ENCODE measurements at regions of chr16 and their contacts with region 1.

Region 1: GRCh38 chr16:106623-107324 is 28.7 kb downstream of the MPG start:
- DNase-seq: no peak
- ATAC-seq: no peak

Region 2: DNA sequence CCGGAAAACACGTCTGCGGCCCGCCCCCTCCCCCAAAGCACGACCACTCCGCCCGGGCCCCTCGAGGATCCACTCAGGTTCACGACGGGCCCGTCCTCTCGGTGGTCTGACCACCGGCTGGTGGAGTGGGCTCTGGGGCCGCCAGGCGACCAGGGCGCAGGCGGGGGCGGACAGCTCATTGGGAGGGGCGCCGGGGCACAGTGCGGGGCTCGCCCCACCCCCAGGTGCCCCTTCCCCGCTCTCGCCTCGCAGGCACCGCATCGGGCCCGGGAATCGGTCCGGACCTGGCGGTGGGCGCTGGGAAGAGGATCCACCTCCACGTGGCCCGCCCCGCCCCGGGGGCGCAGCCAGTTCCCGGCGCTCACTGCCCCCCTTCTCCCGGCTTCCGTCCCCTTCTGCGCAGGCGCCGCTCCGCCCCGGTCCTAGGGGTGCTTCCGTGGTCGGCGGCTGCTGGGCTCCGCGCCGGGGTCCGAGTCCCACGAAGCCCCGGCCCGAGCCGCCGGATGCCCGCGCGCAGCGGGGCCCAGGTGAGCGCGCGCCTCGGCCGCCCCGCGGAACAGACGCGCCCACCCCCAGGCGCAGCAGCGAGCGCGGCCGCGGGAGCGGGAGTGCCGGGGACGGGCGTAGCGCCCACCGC is 28.8 kb before region 1 on chr16 and contains the start of gene MPG:
- intact Hi-C with region 1: no loop called
- DNase-seq: peak; percentile 92
- ATAC-seq: peak; percentile 67
- total RNA-seq, gene MPG: 37.2 TPM

Region 3: GRCh38 chr16:165539-166374 is 59.0 kb after region 1 on chr16 and contains the start of gene HBM:
- intact Hi-C with region 1: no loop called
- DNase-seq: no peak
- ATAC-seq: no peak
- total RNA-seq, gene HBM: not detected

Region 4: DNA sequence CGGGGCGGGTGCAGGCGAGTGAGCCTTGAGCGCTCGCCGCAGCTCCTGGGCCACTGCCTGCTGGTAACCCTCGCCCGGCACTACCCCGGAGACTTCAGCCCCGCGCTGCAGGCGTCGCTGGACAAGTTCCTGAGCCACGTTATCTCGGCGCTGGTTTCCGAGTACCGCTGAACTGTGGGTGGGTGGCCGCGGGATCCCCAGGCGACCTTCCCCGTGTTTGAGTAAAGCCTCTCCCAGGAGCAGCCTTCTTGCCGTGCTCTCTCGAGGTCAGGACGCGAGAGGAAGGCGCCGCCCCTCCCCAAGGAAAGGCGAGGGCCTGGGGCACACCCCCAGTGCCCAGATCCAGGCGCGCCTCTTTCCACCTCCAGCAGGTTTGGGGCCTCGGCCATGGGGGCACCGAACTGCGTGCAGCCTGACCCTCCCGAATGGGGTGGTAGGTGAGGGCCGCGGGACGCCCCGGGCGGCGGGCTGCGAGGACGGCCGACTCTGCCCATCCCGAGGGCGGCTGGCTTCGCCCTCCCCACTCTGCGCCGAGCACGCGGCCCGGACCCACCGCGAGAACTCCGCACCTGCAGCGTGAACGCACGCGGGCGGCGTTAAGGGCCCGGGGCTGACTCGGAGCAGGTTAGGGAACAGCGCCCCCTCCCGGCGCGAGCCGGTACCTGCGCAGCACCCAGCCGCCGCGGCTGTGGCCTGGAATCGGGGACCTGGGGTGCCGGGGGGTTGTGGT is 74.3 kb after region 1 on chr16:
- intact Hi-C with region 1: loop called (anchors 2 kb)
- DNase-seq: peak; percentile 92
- ATAC-seq: peak; percentile 82

Region 5: GRCh38 chr16:361872-362701 is 255.3 kb after region 1 on chr16:
- intact Hi-C with region 1: loop called (anchors 2 kb)
- DNase-seq: peak; percentile 83
- ATAC-seq: peak; percentile 77

Measured in Right ventricle myocardium inferior (tissue), 1 donor.